HepG2 (cell line): ENCODE measurements at regions of chr5 and their contacts with region 1.

Region 1: GRCh38 chr5:74640450-74640953 is at the start of gene ENC1:
- DNase-seq: peak; percentile 95
- ATAC-seq: peak; percentile 83
- H3K4me3 ChIP-seq: peak within 1 kb of the TSS; percentile 92 to 100 (median 99)
- H3K27ac ChIP-seq: peak within 1 kb of the TSS; percentile 83
- H3K4me1 ChIP-seq: peaks cover 43% of the 10 kb centered on the region
- H3K27me3 ChIP-seq: no peaks in the 10 kb centered on the region; a peak in 2 of 5 replicates
- CTCF ChIP-seq: peak; percentile 68
- EP300 ChIP-seq: peak in 1 of 2 experiments; percentile 60; a peak in 2 of 4 replicates
- POLR2A ChIP-seq: peak in 1 of 2 experiments; percentile 98; a peak in 2 of 4 replicates
- RAD21 ChIP-seq: peak; percentile 80
- total RNA-seq, gene ENC1: 63.8 and 69.9 TPM in 2 replicates

Region 2: DNA sequence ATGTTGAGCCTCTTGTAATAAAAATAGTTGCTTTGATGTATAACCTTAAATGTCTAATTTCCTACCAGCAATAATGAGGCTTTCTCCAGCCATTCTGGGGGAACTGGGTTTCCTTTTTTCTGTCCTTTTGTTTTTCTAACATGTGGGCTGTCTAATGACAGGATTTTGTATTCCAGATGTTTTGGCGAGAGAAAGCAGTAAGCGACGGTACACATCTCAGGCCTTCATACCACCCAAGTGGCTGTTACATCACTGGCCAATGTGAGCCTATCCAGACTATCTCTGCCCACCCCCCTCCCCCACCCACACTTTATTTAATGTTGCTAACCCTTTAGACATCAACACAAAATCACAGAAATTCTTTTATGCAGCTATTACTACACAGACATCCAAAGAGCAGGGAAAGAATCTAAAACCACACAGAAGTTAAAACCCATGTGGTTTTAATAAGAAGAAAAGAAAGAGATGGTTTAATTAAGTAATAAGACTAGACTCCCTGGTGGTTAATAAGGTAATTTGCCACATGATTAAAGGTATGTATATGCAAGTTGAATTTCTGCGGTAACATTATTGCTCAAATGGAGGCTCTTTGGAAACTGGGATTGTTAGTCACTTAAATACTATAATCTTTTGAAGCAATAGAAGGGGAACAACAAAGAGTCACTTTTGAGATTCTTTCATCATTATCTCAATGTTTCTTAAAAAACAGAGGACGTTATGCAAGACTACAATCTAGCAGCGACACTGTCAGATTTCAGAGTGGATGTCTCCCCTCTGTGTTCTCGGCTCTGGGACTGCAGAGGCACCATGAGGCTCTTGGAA is 365.1 kb before region 1 on chr5:
- CTCF ChIA-PET with region 1: no interaction called
- POLR2A ChIA-PET with region 1: no interaction called
- in situ Hi-C with region 1: no loop called
- intact Hi-C with region 1: no loop called
- DNase-seq: no peak
- ATAC-seq: no peak
- H3K4me3 ChIP-seq: no peak overlapping the region
- H3K27ac ChIP-seq: no peak overlapping the region
- H3K4me1 ChIP-seq: peaks cover 13% of the 10 kb centered on the region
- H3K27me3 ChIP-seq: peaks cover 0 to 5% of the 10 kb centered on the region in 2 experiments; a peak in 1 of 5 replicates
- CTCF ChIP-seq: no peak
- EP300 ChIP-seq: no peak
- POLR2A ChIP-seq: no peak
- RAD21 ChIP-seq: no peak

Region 3: GRCh38 chr5:74380193-74380592 is 260.3 kb before region 1 on chr5:
- CTCF ChIA-PET with region 1: no interaction called
- POLR2A ChIA-PET with region 1: interaction called, 11 read pairs
- in situ Hi-C with region 1: no loop called
- intact Hi-C with region 1: no loop called
- DNase-seq: peak; percentile 66
- ATAC-seq: peak; percentile 96
- H3K4me3 ChIP-seq: no peak overlapping the region
- H3K27ac ChIP-seq: no peak overlapping the region
- H3K4me1 ChIP-seq: peaks cover 37% of the 10 kb centered on the region
- H3K27me3 ChIP-seq: no peaks in the 10 kb centered on the region
- CTCF ChIP-seq: no peak
- EP300 ChIP-seq: peak in 1 of 2 experiments; percentile 31; a peak in 1 of 4 replicates
- POLR2A ChIP-seq: no peak
- RAD21 ChIP-seq: no peak

Region 4: DNA sequence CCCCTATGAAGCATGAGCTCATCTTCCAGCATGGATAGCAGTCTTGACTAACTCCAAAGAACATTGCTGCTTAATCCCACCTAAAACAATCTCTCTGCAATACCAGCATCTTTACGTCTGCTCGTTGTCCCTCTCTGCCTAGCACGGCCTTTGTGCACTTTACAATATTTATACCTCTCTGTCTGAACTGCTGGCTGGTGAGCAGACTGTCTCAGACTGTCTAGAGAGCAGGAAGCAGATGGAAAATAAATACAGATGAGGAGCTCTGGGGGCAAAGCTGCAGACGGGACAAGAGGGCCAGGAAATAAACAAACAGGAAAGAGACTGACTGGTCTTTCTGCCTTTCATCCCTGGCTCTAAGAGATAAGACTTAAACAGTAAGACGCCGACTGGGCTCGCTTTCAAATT is 224.8 kb before region 1 on chr5:
- CTCF ChIA-PET with region 1: no interaction called
- POLR2A ChIA-PET with region 1: interaction called, 32 read pairs
- in situ Hi-C with region 1: no loop called
- intact Hi-C with region 1: no loop called
- DNase-seq: peak; percentile 81
- ATAC-seq: peak; percentile 95
- H3K4me3 ChIP-seq: no peak overlapping the region; a peak in 1 of 6 replicates
- H3K27ac ChIP-seq: peak overlapping the region; percentile 36
- H3K4me1 ChIP-seq: peaks cover 60% of the 10 kb centered on the region
- H3K27me3 ChIP-seq: no peaks in the 10 kb centered on the region
- CTCF ChIP-seq: no peak
- EP300 ChIP-seq: peak in 1 of 2 experiments; percentile 88; a peak in 2 of 4 replicates
- POLR2A ChIP-seq: no peak
- RAD21 ChIP-seq: no peak

Region 5: GRCh38 chr5:74516211-74516636 is 124.3 kb before region 1 on chr5:
- CTCF ChIA-PET with region 1: no interaction called
- POLR2A ChIA-PET with region 1: interaction called, 11 read pairs
- in situ Hi-C with region 1: no loop called
- intact Hi-C with region 1: no loop called
- DNase-seq: peak; percentile 61
- ATAC-seq: peak; percentile 59
- H3K4me3 ChIP-seq: no peak overlapping the region
- H3K27ac ChIP-seq: no peak overlapping the region
- H3K4me1 ChIP-seq: peaks cover 75% of the 10 kb centered on the region
- H3K27me3 ChIP-seq: no peaks in the 10 kb centered on the region
- CTCF ChIP-seq: no peak
- EP300 ChIP-seq: no peak
- POLR2A ChIP-seq: no peak
- RAD21 ChIP-seq: no peak

Region 6: DNA sequence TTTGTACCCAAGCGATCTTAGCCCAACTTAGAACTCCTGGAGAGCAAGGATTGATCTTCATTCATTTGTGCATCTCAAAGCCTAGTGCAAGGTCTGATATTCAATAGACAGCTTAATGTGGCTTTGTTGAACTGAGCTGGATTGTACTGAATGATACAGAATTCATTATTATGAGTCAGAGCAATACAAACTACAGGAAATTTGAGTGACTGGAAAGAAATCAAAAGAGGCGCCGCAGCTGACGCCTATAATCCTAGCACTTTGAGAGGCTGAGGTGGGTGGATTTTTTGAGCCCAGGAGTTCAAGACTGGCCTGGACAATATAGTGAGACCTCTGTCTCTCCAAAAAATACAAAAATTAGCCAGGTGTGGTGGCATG is 58.5 kb before region 1 on chr5:
- CTCF ChIA-PET with region 1: no interaction called
- POLR2A ChIA-PET with region 1: interaction called, 15 read pairs
- in situ Hi-C with region 1: loop called (anchors 5 kb)
- intact Hi-C with region 1: loop called (anchors 5 kb)
- DNase-seq: no peak
- ATAC-seq: no peak
- H3K4me3 ChIP-seq: no peak overlapping the region
- H3K27ac ChIP-seq: peak overlapping the region; percentile 99
- H3K4me1 ChIP-seq: peaks cover 97% of the 10 kb centered on the region
- H3K27me3 ChIP-seq: no peaks in the 10 kb centered on the region
- CTCF ChIP-seq: no peak
- EP300 ChIP-seq: no peak
- POLR2A ChIP-seq: no peak
- RAD21 ChIP-seq: no peak